ENCODE measurements at regions of chr9 and their contacts with region 1.

Region 1: DNA sequence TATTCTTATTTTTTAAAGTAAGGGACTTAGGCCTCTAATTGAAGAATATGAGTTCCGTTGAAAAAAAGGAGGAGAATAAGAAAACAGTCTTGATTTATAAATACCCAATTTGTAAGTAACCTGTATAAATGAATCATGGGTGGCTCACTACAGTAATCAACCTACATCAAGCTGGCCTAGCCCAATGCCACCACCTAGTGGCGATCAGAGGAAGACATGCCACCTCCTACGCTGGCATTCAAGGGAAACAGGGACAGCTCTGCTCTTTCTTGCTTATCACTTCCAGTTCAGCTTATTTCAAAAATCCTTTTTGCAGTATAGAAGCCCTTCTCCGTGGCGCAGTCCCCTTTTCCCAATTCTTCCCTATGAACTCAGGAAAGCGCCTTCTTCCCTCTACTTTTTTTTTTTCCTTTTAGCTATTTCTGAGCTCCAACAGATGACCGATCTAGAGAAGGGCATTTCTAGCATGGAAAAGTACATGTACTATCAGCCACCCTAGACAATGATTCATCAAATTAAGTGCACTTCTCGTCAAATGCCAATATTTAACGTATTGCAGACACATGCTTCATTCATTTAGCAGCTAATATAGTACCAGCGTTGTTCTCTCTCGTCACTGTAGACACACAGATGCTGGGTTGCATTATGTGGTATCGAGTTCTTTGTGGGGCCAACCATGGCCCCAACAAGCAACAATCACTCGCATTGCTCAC is 28.3 kb downstream of the PTPN3 start:
- H3K4me3 ChIP-seq: no peak overlapping the region
- H3K27ac ChIP-seq: no peak overlapping the region
- H3K4me1 ChIP-seq: peaks cover 20% of the 10 kb centered on the region
- CTCF ChIP-seq: 0 out of 2 replicates have a peak, but pooled peaks have one; percentile 34

Region 2: DNA sequence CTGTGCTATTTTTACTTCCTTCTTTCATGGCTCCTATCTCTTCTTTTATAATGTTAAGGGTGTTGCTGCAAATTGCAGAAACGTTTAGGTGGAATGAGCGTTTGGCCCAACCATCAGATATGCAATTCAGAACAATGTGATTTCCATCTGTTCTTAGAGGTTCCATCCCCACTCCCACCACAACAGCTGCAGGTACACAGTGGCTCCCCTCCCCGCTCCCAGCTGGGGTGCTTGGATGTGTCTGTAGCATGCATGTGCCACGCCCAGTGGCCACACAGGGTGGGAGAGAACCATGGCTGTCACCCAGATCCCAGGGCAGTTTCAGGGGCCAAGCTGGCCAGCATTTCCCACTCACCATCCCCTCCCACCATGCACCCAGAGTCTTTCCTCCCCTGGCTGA is 676.2 kb before region 1 on chr9:
- CTCF ChIA-PET with region 1: no interaction called
- POLR2A ChIA-PET with region 1: no interaction called
- H3K4me3 ChIP-seq: no peak overlapping the region
- H3K27ac ChIP-seq: no peak overlapping the region
- H3K4me1 ChIP-seq: no peaks in the 10 kb centered on the region
- CTCF ChIP-seq: no peak

Region 3: DNA sequence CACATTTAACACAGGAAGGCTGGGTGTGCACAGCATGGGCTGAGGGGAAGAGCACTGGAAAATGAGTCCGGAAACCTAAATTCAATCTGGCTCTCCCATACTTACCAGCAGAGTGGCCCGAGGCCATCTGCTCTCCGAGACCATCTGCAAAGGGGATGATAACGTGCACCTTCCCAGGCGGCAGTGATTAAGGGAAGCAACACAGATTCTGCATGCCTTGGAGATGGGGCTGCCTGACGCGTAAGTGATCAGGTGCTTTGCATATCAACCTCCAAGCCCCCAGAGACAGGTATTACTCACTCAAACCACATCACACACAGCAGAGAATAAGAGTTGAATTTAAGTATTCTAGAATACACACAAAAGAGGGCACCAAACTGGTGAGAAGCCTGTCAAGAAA is 158.1 kb before region 1 on chr9:
- CTCF ChIA-PET with region 1: no interaction called
- POLR2A ChIA-PET with region 1: no interaction called
- H3K4me3 ChIP-seq: no peak overlapping the region
- H3K27ac ChIP-seq: no peak overlapping the region
- H3K4me1 ChIP-seq: peaks cover 10% of the 10 kb centered on the region
- CTCF ChIP-seq: no peak

Region 4: GRCh38 chr9:109411798-109412352 is 57.9 kb before region 1 on chr9:
- CTCF ChIA-PET with region 1: interaction called, 16 read pairs
- POLR2A ChIA-PET with region 1: no interaction called
- H3K4me3 ChIP-seq: no peak overlapping the region
- H3K27ac ChIP-seq: no peak overlapping the region
- H3K4me1 ChIP-seq: no peaks in the 10 kb centered on the region
- CTCF ChIP-seq: peak; percentile 16; the same call in 1 of the 2 replicates

Region 5: GRCh38 chr9:109453210-109453842 is 16.5 kb before region 1 on chr9:
- CTCF ChIA-PET with region 1: interaction called, 36 read pairs
- POLR2A ChIA-PET with region 1: no interaction called
- H3K4me3 ChIP-seq: no peak overlapping the region
- H3K27ac ChIP-seq: no peak overlapping the region
- H3K4me1 ChIP-seq: 0 out of 2 replicates have a peak, but pooled peaks cover 3% of the 10 kb centered on the region
- CTCF ChIP-seq: no peak

Region 6: GRCh38 chr9:109483744-109484429 is 14.1 kb after region 1 on chr9:
- CTCF ChIA-PET with region 1: interaction called, 20 read pairs
- POLR2A ChIA-PET with region 1: no interaction called
- H3K4me3 ChIP-seq: no peak overlapping the region
- H3K27ac ChIP-seq: no peak overlapping the region
- H3K4me1 ChIP-seq: no peaks in the 10 kb centered on the region
- CTCF ChIP-seq: no peak

Region 7: DNA sequence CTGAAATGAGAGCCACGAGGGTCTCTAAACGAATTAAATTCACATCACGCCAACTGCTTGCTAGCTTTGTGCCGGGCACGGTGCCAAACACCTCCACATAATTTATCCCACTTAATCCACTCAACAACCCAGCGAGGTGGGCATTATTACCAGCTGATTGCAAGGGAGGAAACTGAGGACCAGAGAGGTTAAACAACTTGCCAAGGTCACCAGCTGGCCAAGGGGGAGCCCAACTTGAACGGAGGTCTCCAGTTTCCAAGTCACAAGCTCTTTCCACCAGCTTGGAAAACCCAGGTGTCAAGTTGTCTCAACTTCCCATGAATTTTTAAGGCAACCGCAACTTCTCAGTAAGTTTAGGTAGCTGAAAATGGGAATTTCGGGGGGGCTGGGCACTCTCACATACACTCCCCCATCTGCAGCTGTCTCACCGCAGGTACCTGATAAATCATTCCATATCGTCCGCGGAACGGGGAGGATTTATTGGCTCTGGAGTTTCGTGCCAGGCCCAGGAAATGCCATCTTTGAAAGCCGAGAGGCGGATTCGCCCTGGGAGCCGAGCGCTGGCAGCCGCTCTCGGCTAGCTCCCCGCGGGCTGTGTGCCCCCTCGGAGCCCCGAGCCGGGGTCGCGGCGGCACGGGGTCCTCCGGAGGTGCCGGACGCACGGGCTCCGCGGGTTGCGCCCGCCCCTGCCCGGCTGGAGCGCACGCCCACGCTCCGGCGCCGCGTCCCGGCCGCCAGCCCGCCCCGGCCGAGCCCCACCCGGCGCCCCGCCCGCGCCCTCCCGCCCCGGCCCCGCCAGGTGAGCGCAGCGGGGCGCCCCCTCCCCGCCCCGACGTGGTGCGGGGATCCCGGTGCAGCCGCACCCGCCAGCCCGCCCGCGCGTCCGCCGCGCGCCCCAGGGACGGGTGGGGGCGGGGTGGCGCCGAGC is 27.7 kb after region 1 on chr9:
- CTCF ChIA-PET with region 1: interaction called, 12 read pairs
- POLR2A ChIA-PET with region 1: interaction called, 4 read pairs
- H3K4me3 ChIP-seq: peak overlapping the region; percentile 62
- H3K27ac ChIP-seq: peak overlapping the region; percentile 46; the same call in 1 of the 2 replicates
- H3K4me1 ChIP-seq: peaks cover 5% of the 10 kb centered on the region; the same call in 1 of the 2 replicates
- CTCF ChIP-seq: no peak

Region 8: DNA sequence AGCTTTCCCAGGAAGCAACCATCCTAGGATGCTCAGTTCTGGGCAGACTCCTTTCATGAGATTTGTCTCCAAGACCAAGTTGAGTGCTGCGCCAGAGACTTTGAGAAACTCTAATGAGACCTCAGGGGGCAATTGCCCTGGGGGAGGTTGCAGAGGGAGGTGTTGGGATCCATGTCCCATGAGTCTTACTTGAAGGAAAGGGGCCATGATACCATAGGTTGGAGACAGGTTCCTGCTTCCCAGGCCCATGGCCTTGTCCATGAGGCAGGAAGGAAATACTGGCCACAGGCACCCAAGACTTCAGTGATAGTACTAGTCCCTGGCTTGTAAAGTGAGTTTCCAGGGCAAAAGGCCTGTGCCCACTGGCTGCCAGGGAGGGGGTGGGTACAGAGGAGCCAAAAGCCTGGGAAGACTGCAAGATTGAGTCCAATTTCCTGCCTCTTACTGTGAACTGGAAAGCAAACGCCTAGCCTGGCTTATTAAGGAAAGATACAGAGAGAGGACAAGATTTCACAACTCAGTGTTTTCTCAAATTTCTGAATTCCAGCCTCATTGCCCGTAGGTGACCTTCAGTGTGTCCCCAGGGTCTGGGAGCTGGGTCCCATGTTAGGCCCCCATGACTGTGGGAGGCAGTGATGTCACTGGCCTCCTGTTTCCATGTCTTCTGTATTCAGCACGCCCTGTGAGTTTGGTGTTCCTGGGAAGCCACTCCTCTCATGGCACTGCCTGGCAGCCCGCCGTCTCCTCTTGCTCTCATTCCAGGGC is 88.8 kb after region 1 on chr9:
- CTCF ChIA-PET with region 1: no interaction called
- POLR2A ChIA-PET with region 1: no interaction called
- H3K4me3 ChIP-seq: no peak overlapping the region
- H3K27ac ChIP-seq: no peak overlapping the region
- H3K4me1 ChIP-seq: no peaks in the 10 kb centered on the region
- CTCF ChIP-seq: no peak

Region 9: GRCh38 chr9:109579191-109579948 is 109.6 kb after region 1 on chr9:
- CTCF ChIA-PET with region 1: no interaction called
- POLR2A ChIA-PET with region 1: no interaction called
- H3K4me3 ChIP-seq: no peak overlapping the region
- H3K27ac ChIP-seq: no peak overlapping the region
- H3K4me1 ChIP-seq: no peaks in the 10 kb centered on the region
- CTCF ChIP-seq: no peak